ENCODE measurements at regions of chr4 and their contacts with region 1.

Region 1: GRCh38 chr4:79917246-79917645 is 155.8 kb downstream of the ANTXR2 start:
- DNase-seq: peak; percentile 44
- ATAC-seq: no peak
- H3K4me3 ChIP-seq: no peak overlapping the region
- H3K27ac ChIP-seq: no peak overlapping the region
- H3K4me1 ChIP-seq: peaks cover 6% of the 10 kb centered on the region; the same call in 1 of the 2 replicates
- H3K27me3 ChIP-seq: no peaks in the 10 kb centered on the region
- CTCF ChIP-seq: peak; percentile 50
- POLR2A ChIP-seq: no peak
- RAD21 ChIP-seq: peak; percentile 44

Region 2: GRCh38 chr4:80215449-80216052 is 298.3 kb after region 1 on chr4:
- CTCF ChIA-PET with region 1: no interaction called
- POLR2A ChIA-PET with region 1: no interaction called
- dilution Hi-C with region 1: no loop called
- in situ Hi-C with region 1: no loop called
- intact Hi-C with region 1: loop called (anchors 10 kb)
- DNase-seq: peak; percentile 64
- ATAC-seq: no peak
- H3K4me3 ChIP-seq: no peak overlapping the region
- H3K27ac ChIP-seq: no peak overlapping the region
- H3K4me1 ChIP-seq: peaks cover 9% of the 10 kb centered on the region
- H3K27me3 ChIP-seq: no peaks in the 10 kb centered on the region
- CTCF ChIP-seq: peak; percentile 74
- POLR2A ChIP-seq: no peak
- RAD21 ChIP-seq: peak; percentile 68

Region 3: DNA sequence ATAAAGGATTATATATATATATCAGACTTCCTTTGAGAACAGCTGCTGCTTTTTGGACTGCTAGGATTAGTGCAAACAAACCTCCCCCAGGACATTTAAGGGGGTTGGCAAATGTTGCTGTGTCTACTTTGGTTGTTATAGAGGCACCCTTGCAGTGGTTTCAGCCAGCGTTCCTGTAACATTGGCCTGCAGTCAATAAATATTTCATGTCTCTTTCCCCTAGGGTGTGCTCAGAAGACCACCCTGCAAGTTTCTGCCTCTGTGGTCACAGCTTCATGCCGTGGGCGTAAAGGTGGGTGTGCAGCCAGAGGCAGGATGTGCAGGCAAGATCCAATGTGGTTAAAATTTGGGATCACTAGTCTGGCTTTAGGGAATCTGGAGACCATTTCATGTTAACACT is 378.1 kb after region 1 on chr4:
- CTCF ChIA-PET with region 1: no interaction called
- POLR2A ChIA-PET with region 1: no interaction called
- dilution Hi-C with region 1: no loop called
- in situ Hi-C with region 1: no loop called
- intact Hi-C with region 1: no loop called
- DNase-seq: no peak
- ATAC-seq: 0 out of 2 replicates have a peak, but pooled peaks have one; percentile 12
- H3K4me3 ChIP-seq: no peak overlapping the region
- H3K27ac ChIP-seq: no peak overlapping the region
- H3K4me1 ChIP-seq: peaks cover 10% of the 10 kb centered on the region
- H3K27me3 ChIP-seq: no peaks in the 10 kb centered on the region
- CTCF ChIP-seq: no peak
- POLR2A ChIP-seq: no peak
- RAD21 ChIP-seq: no peak